ENCODE measurements at regions of chr3 and their contacts with region 1.

Region 1: GRCh38 chr3:181741417-181741816 is 29.7 kb downstream of the SOX2 start:
- DNase-seq: no peak
- ATAC-seq: no peak
- H3K4me3 ChIP-seq: no peak overlapping the region
- H3K27ac ChIP-seq: no peak overlapping the region
- H3K4me1 ChIP-seq: no peaks in the 10 kb centered on the region
- CTCF ChIP-seq: no peak
- EP300 ChIP-seq: no peak
- POLR2A ChIP-seq: no peak
- RAD21 ChIP-seq: no peak

Region 2: GRCh38 chr3:181344331-181344730 is 397.1 kb before region 1 on chr3:
- CTCF ChIA-PET with region 1: no interaction called
- POLR2A ChIA-PET with region 1: no interaction called
- DNase-seq: no peak
- ATAC-seq: no peak
- H3K4me3 ChIP-seq: no peak overlapping the region
- H3K27ac ChIP-seq: no peak overlapping the region
- H3K4me1 ChIP-seq: no peaks in the 10 kb centered on the region
- CTCF ChIP-seq: no peak
- EP300 ChIP-seq: no peak
- POLR2A ChIP-seq: no peak
- RAD21 ChIP-seq: no peak

Region 3: GRCh38 chr3:181582619-181583018 is 158.8 kb before region 1 on chr3:
- CTCF ChIA-PET with region 1: no interaction called
- POLR2A ChIA-PET with region 1: no interaction called
- DNase-seq: no peak
- ATAC-seq: no peak
- H3K4me3 ChIP-seq: no peak overlapping the region
- H3K27ac ChIP-seq: no peak overlapping the region
- H3K4me1 ChIP-seq: no peaks in the 10 kb centered on the region
- CTCF ChIP-seq: no peak
- EP300 ChIP-seq: no peak
- POLR2A ChIP-seq: no peak
- RAD21 ChIP-seq: no peak

Region 4: DNA sequence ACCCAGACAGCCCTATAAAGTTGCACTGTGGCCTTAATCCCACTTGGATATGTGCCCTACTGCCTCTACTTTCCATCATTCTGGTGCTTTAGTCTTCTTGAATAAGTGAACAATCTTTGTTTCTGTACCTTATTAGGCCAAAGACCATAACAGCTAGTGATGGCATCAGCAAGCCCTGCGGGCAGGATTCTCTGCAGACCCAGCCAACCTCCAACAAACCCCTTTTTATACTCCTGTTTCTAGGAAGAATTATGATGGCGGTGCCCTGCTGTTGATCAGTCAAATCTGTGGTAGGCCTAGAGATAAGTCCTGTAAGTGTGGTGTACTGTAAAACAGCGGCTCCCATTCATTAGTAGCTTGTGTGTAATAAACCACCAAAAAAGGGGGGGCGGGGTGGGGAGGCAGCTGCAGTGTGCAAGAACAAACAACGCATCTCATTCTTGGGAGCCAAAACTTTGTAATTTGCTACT is 10.8 kb after region 1 on chr3:
- CTCF ChIA-PET with region 1: no interaction called
- POLR2A ChIA-PET with region 1: interaction called, 12 read pairs
- DNase-seq: no peak
- ATAC-seq: no peak
- H3K4me3 ChIP-seq: no peak overlapping the region
- H3K27ac ChIP-seq: no peak overlapping the region
- H3K4me1 ChIP-seq: no peaks in the 10 kb centered on the region
- CTCF ChIP-seq: no peak
- EP300 ChIP-seq: no peak
- POLR2A ChIP-seq: no peak
- RAD21 ChIP-seq: no peak

Region 5: GRCh38 chr3:181773921-181774320 is 32.5 kb after region 1 on chr3:
- CTCF ChIA-PET with region 1: no interaction called
- POLR2A ChIA-PET with region 1: no interaction called
- DNase-seq: no peak
- ATAC-seq: no peak
- H3K4me3 ChIP-seq: no peak overlapping the region
- H3K27ac ChIP-seq: no peak overlapping the region
- H3K4me1 ChIP-seq: no peaks in the 10 kb centered on the region
- CTCF ChIP-seq: no peak
- EP300 ChIP-seq: no peak
- POLR2A ChIP-seq: no peak
- RAD21 ChIP-seq: no peak